ENCODE measurements at regions of chr20 and their contacts with region 1.

Region 1: GRCh38 chr20:31851240-31851955 is 6.0 kb upstream of the FOXS1 start:
- H3K4me3 ChIP-seq: no peak overlapping the region
- H3K27ac ChIP-seq: no peak overlapping the region
- H3K4me1 ChIP-seq: no peaks in the 10 kb centered on the region
- CTCF ChIP-seq: no peak

Region 2: GRCh38 chr20:31430568-31431115 is 420.8 kb before region 1 on chr20:
- CTCF ChIA-PET with region 1: no interaction called
- POLR2A ChIA-PET with region 1: no interaction called
- H3K4me3 ChIP-seq: no peak overlapping the region
- H3K27ac ChIP-seq: no peak overlapping the region
- H3K4me1 ChIP-seq: no peaks in the 10 kb centered on the region
- CTCF ChIP-seq: no peak

Region 3: GRCh38 chr20:31835977-31836852 is 15.2 kb before region 1 on chr20:
- CTCF ChIA-PET with region 1: interaction called, 87 read pairs
- POLR2A ChIA-PET with region 1: interaction called, 3 read pairs
- H3K4me3 ChIP-seq: no peak overlapping the region
- H3K27ac ChIP-seq: no peak overlapping the region
- H3K4me1 ChIP-seq: no peaks in the 10 kb centered on the region
- CTCF ChIP-seq: no peak

Region 4: DNA sequence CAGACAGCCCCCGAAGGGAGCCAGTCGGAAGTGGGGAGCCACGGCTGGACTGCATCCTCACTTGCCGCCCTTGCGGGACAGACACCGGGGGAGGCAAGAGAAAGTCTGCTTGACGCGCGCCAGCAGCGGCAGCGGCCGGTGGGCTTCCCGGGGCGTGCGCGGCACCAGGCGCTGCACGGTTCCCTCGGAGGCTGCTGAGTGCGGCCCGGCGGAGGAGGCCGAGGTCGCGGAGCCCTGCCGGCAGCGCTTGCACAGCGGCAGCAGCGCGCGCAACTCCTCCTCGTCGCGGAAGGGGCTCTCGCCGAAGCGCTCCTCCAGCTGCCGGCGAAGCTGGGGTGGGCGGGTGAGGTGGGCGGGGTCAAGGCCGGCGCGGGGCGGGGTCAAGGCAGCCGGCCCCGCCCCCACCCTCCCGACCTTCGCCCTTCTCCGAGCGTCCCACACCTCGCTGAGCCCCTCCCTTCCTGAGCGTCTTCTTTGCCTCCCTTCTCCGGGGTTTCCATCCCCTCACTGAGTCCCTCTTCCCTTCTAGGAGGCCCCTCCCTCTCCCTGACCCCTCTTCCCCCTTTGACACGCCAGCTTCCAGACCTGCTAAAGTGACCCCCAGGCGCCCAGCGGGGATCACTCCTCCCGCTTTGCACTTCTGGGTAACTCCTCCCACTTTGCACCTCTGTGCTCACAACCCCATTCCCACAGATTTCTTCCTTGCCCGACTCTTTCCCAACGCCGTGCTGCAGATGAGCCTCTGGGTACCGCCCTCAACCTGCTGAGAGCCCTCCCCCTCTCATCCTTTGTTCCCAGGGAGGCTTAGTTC is 10.2 kb after region 1 on chr20:
- CTCF ChIA-PET with region 1: interaction called, 26 read pairs
- POLR2A ChIA-PET with region 1: no interaction called
- H3K4me3 ChIP-seq: peak overlapping the region; percentile 38
- H3K27ac ChIP-seq: no peak overlapping the region
- H3K4me1 ChIP-seq: 0 out of 2 replicates have a peak, but pooled peaks cover 2% of the 10 kb centered on the region
- CTCF ChIP-seq: no peak

Region 5: DNA sequence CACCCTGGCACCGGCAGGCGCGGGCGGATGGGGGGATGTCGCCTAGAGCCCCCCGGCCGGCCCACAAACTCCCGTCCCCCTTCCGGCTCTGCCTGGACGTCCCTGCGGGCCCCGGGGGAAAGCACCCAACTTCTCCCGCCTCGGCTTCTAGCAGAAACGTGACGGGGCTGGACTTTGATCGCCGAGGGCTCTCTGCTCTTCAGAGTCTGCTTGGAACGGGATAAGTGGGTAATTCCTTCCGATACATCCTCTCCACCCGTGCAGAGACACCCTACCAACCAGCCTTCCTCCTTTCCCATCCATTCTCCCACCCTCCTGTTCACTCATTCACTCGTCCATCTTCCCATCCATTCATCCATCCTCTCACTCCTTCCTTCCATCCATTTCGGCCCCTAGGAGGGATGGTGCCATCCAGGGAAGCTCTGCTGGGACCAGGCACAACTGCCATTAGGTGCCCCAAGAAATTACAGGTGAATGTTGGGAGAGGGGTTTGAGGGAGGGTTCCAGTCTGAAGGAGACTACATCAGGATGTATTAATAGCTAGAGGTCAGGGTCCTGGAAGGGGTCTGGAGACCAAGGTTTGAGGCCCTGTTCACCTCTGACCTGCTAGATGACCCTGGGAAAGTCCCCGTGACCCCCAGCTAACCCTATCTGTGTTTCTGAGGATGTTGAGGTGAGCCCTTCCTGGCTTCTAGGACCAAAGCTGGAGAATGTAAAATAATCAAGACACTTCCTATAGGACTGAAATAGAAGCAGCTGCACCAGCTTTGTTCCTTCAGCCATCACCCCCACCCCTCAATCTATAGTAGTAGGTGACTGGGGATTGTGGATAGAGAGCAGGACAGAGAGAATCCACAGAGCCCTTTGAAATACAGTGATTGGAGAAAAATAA is 19.6 kb after region 1 on chr20:
- CTCF ChIA-PET with region 1: interaction called, 14 read pairs
- POLR2A ChIA-PET with region 1: no interaction called
- H3K4me3 ChIP-seq: peak overlapping the region; percentile 48
- H3K27ac ChIP-seq: peak overlapping the region; percentile 56; the same call in 1 of the 2 replicates
- H3K4me1 ChIP-seq: no peaks in the 10 kb centered on the region
- CTCF ChIP-seq: no peak

Region 6: GRCh38 chr20:31956556-31957526 is 105.4 kb after region 1 on chr20:
- CTCF ChIA-PET with region 1: interaction called, 83 read pairs
- POLR2A ChIA-PET with region 1: interaction called, 9 read pairs
- H3K4me3 ChIP-seq: no peak overlapping the region
- H3K27ac ChIP-seq: no peak overlapping the region
- H3K4me1 ChIP-seq: no peaks in the 10 kb centered on the region
- CTCF ChIP-seq: no peak

Region 7: GRCh38 chr20:32091888-32092346 is 240.5 kb after region 1 on chr20:
- CTCF ChIA-PET with region 1: interaction called, 24 read pairs
- POLR2A ChIA-PET with region 1: no interaction called
- H3K4me3 ChIP-seq: no peak overlapping the region
- H3K27ac ChIP-seq: no peak overlapping the region
- H3K4me1 ChIP-seq: no peaks in the 10 kb centered on the region
- CTCF ChIP-seq: peak; percentile 89

Measured in HEK293 (cell line).